Natural killer cell (primary cell): ENCODE measurements at regions of chr20 and their contacts with region 1.

Region 1: GRCh38 chr20:62926239-62927104 is at the start of gene DIDO1:
- DNase-seq: peak; percentile 86 to 96
- ATAC-seq: peak; percentile 72 to 90 (median 86)
- H3K4me3 ChIP-seq: peak within 1 kb of the TSS; percentile 94
- H3K4me3 Mint-ChIP-seq: peak within 1 kb of the TSS; percentile 97
- H3K27ac ChIP-seq: peak within 1 kb of the TSS; percentile 88
- H3K27ac Mint-ChIP-seq: peak within 1 kb of the TSS; percentile 95 to 97
- H3K4me1 ChIP-seq: peaks cover 68% of the 10 kb centered on the region
- H3K4me1 Mint-ChIP-seq: peaks cover 51 to 67% of the 10 kb centered on the region in 2 donors
- H3K27me3 ChIP-seq: no peaks in the 10 kb centered on the region
- H3K27me3 Mint-ChIP-seq: no peaks in the 10 kb centered on the region
- CTCF ChIP-seq: peak; percentile 68
- total RNA-seq, gene DIDO1: 79.5 to 116 (median 83.4) TPM

Region 2: GRCh38 chr20:62861726-62862336 is 64.6 kb before region 1 on chr20 and contains the start of gene TCFL5:
- intact Hi-C with region 1: loop called (anchors 5 kb)
- DNase-seq: peak; percentile 94 to 97
- ATAC-seq: peak; percentile 89 to 99 (median 91)
- H3K4me3 ChIP-seq: peak within 1 kb of the TSS; percentile 23
- H3K4me3 Mint-ChIP-seq: peak within 1 kb of the TSS; percentile 78
- H3K27ac ChIP-seq: peak within 1 kb of the TSS; percentile 45
- H3K27ac Mint-ChIP-seq: peak within 1 kb of the TSS; percentile 50 to 51
- H3K4me1 ChIP-seq: peaks cover 10% of the 10 kb centered on the region
- H3K4me1 Mint-ChIP-seq: peaks cover 13 to 28% of the 10 kb centered on the region in 2 donors
- H3K27me3 ChIP-seq: no peaks in the 10 kb centered on the region
- H3K27me3 Mint-ChIP-seq: no peaks in the 10 kb centered on the region
- CTCF ChIP-seq: no peak
- total RNA-seq, gene TCFL5: 5.1 to 8.0 (median 6.4) TPM

Region 3: GRCh38 chr20:62900052-62900691 is 26.3 kb before region 1 on chr20:
- intact Hi-C with region 1: loop called (anchors 2 kb)
- DNase-seq: peak; percentile 69 to 88
- ATAC-seq: peak; percentile 92 to 98 (median 96)
- H3K4me3 ChIP-seq: no peak overlapping the region
- H3K4me3 Mint-ChIP-seq: peak overlapping the region; percentile 31
- H3K27ac ChIP-seq: peak overlapping the region; percentile 12
- H3K27ac Mint-ChIP-seq: peak overlapping the region; percentile 57 to 77
- H3K4me1 ChIP-seq: peaks cover 13% of the 10 kb centered on the region
- H3K4me1 Mint-ChIP-seq: peaks cover 26 to 29% of the 10 kb centered on the region in 2 donors
- H3K27me3 ChIP-seq: no peaks in the 10 kb centered on the region
- H3K27me3 Mint-ChIP-seq: no peaks in the 10 kb centered on the region
- CTCF ChIP-seq: peak; percentile 96

Region 4: DNA sequence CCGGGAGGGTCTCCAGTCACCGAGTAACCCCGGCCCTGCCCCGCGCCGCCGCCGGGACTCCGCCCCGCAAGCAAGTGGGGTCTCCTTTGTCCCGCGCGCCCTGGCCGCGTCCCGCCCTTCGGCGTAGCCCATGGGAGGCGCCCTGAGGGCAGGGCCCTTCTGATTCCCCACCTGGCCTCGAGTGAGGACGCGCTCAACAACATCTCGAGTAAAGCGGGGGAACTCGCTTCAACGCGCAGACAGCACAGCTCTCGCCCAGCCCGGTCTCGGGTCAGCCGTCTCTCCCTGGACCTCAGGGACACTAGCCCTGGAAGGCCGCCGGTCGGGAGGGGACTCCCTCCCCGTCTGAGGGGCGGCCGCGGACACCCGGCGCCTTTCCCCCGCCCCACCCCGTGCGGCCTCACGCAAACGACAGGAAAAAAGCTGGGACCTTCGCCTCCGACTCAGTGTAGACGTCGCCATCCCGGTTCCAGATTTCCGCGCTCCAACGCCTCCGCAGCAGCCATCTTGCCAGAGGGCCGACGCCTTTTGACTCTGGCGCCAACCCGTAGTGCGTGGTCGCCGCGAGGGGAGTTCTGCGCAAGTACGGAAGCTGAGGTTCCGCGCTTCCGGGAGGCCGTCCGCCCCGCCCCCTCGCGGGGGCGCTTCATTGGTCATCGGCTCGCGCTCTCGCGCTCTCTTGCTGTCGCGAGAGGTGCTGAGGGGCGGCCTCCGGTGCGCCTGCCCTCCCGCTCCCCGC is 11.1 kb after region 1 on chr20:
- intact Hi-C with region 1: loop called (anchors 1 kb)
- DNase-seq: peak; percentile 98
- ATAC-seq: peak; percentile 87 to 96 (median 91)
- H3K4me3 ChIP-seq: peak overlapping the region; percentile 75
- H3K4me3 Mint-ChIP-seq: peak overlapping the region; percentile 95
- H3K27ac ChIP-seq: peak overlapping the region; percentile 67
- H3K27ac Mint-ChIP-seq: peak overlapping the region; percentile 79 to 92
- H3K4me1 ChIP-seq: peaks cover 31% of the 10 kb centered on the region
- H3K4me1 Mint-ChIP-seq: peaks cover 36 to 39% of the 10 kb centered on the region in 2 donors
- H3K27me3 ChIP-seq: no peaks in the 10 kb centered on the region
- H3K27me3 Mint-ChIP-seq: no peaks in the 10 kb centered on the region
- CTCF ChIP-seq: no peak